Uterus (tissue), 4 donors: ENCODE measurements at regions of chr19 and their contacts with region 1.

Region 1: GRCh38 chr19:15177269-15178116 is 23.3 kb downstream of the NOTCH3 start:
- DNase-seq: peak; percentile 63 to 81
- H3K4me3 ChIP-seq: no peak overlapping the region
- H3K27ac ChIP-seq: peak overlapping the region in 1 of 2 donors; percentile 17
- H3K4me1 ChIP-seq: no peaks in the 10 kb centered on the region
- H3K27me3 ChIP-seq: no peaks in the 10 kb centered on the region
- CTCF ChIP-seq: peak; percentile 92 to 99 (median 98)
- POLR2A ChIP-seq: peak in 1 of 2 donors; percentile 22

Region 2: GRCh38 chr19:14039181-14039580 is 1138.3 kb before region 1 on chr19:
- intact Hi-C with region 1: no loop called
- DNase-seq: no peak
- H3K4me3 ChIP-seq: no peak overlapping the region
- H3K27ac ChIP-seq: no peak overlapping the region
- H3K4me1 ChIP-seq: no peaks in the 10 kb centered on the region
- H3K27me3 ChIP-seq: no peaks in the 10 kb centered on the region
- CTCF ChIP-seq: no peak
- POLR2A ChIP-seq: no peak

Region 3: GRCh38 chr19:15195371-15196334 is 18.2 kb after region 1 on chr19:
- intact Hi-C with region 1: no loop called
- DNase-seq: peak; percentile 53 to 55
- H3K4me3 ChIP-seq: peak overlapping the region; percentile 7 to 14
- H3K27ac ChIP-seq: peak overlapping the region; percentile 51 to 53
- H3K4me1 ChIP-seq: peaks cover 0 to 15% of the 10 kb centered on the region in 2 donors
- H3K27me3 ChIP-seq: no peaks in the 10 kb centered on the region
- CTCF ChIP-seq: peak in 2 of 4 experiments; percentile 30 to 38
- POLR2A ChIP-seq: no peak

Region 4: DNA sequence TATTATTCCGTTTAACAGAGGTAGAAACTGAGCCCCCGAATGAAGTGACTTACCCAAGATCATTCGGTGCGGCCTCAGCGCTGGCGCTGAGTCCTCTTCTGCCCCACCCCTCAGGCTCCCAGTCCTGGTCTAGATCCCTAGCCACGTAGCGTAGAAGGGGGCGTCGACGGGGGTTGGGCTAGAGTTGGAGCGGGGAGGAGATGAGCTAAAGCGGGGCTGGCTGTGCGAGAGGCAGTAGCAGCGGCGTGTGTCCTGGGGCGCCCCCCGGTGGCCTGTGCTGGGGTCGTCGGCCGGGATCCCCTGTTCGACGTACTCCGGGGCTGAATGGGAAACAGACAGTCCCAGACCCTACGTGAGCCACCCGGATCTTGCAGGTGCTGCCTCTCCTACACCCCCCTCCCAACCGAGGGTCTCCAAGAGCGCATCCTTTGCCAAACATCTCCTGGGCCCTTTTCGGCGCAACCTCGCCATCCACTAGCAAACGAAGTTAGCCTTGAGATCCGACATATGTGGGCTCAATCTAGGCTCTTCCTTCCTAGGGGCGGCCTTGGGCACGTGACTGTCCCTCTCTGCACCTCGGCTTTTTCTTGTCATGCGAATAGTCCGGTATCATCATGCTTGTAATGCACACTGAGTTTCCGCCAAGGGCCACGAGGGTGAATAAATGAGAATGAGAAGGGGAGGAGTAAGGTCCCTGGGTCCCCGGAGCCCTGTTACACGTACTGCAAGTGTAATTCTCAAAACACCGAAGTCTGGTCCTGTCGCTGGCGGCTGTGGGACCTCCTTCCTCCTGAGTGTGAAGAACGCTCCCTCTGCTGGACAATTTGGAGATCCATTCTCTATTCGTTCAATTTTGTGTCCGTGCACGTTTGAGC is 378.5 kb after region 1 on chr19:
- intact Hi-C with region 1: loop called (anchors 5 kb)
- DNase-seq: peak; percentile 83 to 86
- H3K4me3 ChIP-seq: peak overlapping the region in 1 of 2 donors; percentile 10
- H3K27ac ChIP-seq: peak overlapping the region in 1 of 2 donors; percentile 61
- H3K4me1 ChIP-seq: peaks cover 0 to 6% of the 10 kb centered on the region in 2 donors
- H3K27me3 ChIP-seq: no peaks in the 10 kb centered on the region
- CTCF ChIP-seq: peak; percentile 73 to 89 (median 84)
- POLR2A ChIP-seq: no peak